Natural killer cell (primary cell): ENCODE measurements at regions of chr2 and their contacts with region 1.

Region 1: DNA sequence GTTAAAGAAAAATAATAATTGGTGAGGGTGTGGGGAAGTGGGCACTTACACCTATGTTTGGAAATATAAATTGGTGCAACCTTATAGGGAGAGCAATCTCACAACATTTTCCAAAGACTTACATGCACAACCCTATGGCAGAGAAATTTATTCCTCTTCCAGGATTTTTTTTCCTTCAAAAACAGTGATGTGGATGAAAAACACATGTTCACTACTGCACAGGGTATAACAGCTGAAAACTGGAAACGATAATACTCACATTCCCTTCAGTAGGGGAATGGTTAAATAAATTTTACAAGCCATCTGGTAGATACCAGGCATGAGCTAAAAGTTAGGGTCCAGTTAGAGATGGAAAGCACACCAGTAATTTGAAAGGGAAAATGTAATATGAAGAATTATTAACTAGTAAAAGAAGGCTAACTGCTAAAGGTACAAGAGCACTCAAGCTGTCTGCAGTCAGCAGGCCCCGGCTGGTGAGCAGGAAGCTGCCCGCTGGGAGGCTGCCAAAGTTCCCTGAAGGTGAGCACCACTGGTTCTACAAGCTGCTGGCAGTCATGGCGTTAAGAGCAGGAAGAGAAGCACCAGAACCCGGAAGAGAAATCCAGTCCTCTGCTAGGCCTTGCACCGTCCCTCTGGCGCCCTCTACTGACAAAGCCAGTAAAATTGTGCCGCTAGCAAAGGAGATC is 28.4 kb upstream of the CASP8 start:
- DNase-seq: peak; percentile 81 to 97
- ATAC-seq: peak; percentile 68 to 85 (median 71)
- H3K4me3 ChIP-seq: no peak overlapping the region
- H3K4me3 Mint-ChIP-seq: peak overlapping the region; percentile 93
- H3K27ac ChIP-seq: peak overlapping the region; percentile 13
- H3K27ac Mint-ChIP-seq: peak overlapping the region; percentile 97
- H3K4me1 ChIP-seq: peaks cover 38% of the 10 kb centered on the region
- H3K4me1 Mint-ChIP-seq: peaks cover 67 to 71% of the 10 kb centered on the region in 2 donors
- H3K27me3 ChIP-seq: no peaks in the 10 kb centered on the region
- H3K27me3 Mint-ChIP-seq: no peaks in the 10 kb centered on the region
- CTCF ChIP-seq: peak; percentile 96

Region 2: GRCh38 chr2:199716807-199717586 is 1514.9 kb before region 1 on chr2:
- intact Hi-C with region 1: no loop called
- DNase-seq: no peak
- ATAC-seq: no peak
- H3K4me3 ChIP-seq: no peak overlapping the region
- H3K4me3 Mint-ChIP-seq: no peak overlapping the region
- H3K27ac ChIP-seq: no peak overlapping the region
- H3K27ac Mint-ChIP-seq: no peak overlapping the region
- H3K4me1 ChIP-seq: no peaks in the 10 kb centered on the region
- H3K4me1 Mint-ChIP-seq: no peaks in the 10 kb centered on the region
- H3K27me3 ChIP-seq: no peaks in the 10 kb centered on the region
- H3K27me3 Mint-ChIP-seq: peaks cover 2 to 5% of the 10 kb centered on the region in 2 donors
- CTCF ChIP-seq: no peak

Region 3: GRCh38 chr2:201182650-201183364 is 49.1 kb before region 1 on chr2 and contains the start of gene CASP10:
- intact Hi-C with region 1: loop called (anchors 1 kb)
- DNase-seq: peak in 1 of 2 donors; percentile 87
- ATAC-seq: peak; percentile 75 to 83 (median 79)
- H3K4me3 ChIP-seq: peak within 1 kb of the TSS; percentile 59
- H3K4me3 Mint-ChIP-seq: peak within 1 kb of the TSS; percentile 97
- H3K27ac ChIP-seq: peak within 1 kb of the TSS; percentile 72
- H3K27ac Mint-ChIP-seq: peak within 1 kb of the TSS; percentile 97 to 98
- H3K4me1 ChIP-seq: peaks cover 28% of the 10 kb centered on the region
- H3K4me1 Mint-ChIP-seq: peaks cover 51 to 52% of the 10 kb centered on the region in 2 donors
- H3K27me3 ChIP-seq: no peaks in the 10 kb centered on the region
- H3K27me3 Mint-ChIP-seq: no peaks in the 10 kb centered on the region
- CTCF ChIP-seq: peak; percentile 57
- total RNA-seq, gene CASP10: 67.4 to 101 (median 75.3) TPM

Region 4: GRCh38 chr2:201257956-201258665 is 26.2 kb after region 1 on chr2:
- intact Hi-C with region 1: loop called (anchors 1 kb)
- DNase-seq: peak; percentile 75 to 97
- ATAC-seq: peak; percentile 53 to 83 (median 73)
- H3K4me3 ChIP-seq: peak overlapping the region; percentile 42
- H3K4me3 Mint-ChIP-seq: peak overlapping the region; percentile 94
- H3K27ac ChIP-seq: peak overlapping the region; percentile 98
- H3K27ac Mint-ChIP-seq: peak overlapping the region; percentile 100
- H3K4me1 ChIP-seq: peaks cover 71% of the 10 kb centered on the region
- H3K4me1 Mint-ChIP-seq: peaks cover 66 to 77% of the 10 kb centered on the region in 2 donors
- H3K27me3 ChIP-seq: no peaks in the 10 kb centered on the region
- H3K27me3 Mint-ChIP-seq: no peaks in the 10 kb centered on the region
- CTCF ChIP-seq: no peak

Region 5: DNA sequence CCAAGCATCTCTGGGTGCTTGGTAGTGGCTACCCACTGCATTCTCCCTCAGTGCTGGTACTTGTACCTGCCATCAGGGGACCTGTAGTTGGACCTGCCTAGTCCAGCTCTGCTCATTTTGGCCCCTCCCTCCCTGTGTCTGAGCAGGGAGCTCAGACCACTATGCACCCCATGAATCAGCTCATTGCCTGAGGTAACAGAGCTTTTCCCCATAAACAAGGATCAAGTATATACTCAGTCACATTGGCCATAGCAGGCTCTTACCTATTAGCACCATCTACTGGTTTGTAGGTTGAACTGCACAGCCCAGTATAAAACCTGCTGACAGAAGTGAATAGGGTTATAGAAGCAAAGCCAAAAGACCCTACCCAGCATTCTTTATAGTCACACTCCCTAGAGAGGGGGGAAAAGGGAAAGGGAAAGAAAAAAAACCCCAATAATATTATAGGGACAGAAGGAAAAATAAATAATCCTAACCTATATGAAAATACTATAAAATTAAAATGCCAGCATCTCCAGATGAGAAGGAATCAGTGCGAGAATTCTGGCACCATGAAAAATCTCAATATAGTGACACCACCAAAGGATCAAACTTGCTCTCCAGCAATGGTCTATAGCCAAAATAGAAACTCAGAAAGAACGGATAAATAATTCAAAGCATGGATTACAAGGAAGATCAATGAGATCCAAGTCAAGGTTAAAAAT is 132.1 kb after region 1 on chr2:
- intact Hi-C with region 1: loop called (anchors 1 kb)
- DNase-seq: peak in 1 of 2 donors; percentile 74
- ATAC-seq: peak; percentile 92 to 99 (median 98)
- H3K4me3 ChIP-seq: no peak overlapping the region
- H3K4me3 Mint-ChIP-seq: no peak overlapping the region
- H3K27ac ChIP-seq: no peak overlapping the region
- H3K27ac Mint-ChIP-seq: no peak overlapping the region
- H3K4me1 ChIP-seq: peaks cover 4% of the 10 kb centered on the region
- H3K4me1 Mint-ChIP-seq: no peaks in the 10 kb centered on the region
- H3K27me3 ChIP-seq: no peaks in the 10 kb centered on the region
- H3K27me3 Mint-ChIP-seq: no peaks in the 10 kb centered on the region
- CTCF ChIP-seq: peak; percentile 89